ENCODE measurements at regions of chr17 and their contacts with region 1.

Region 1: GRCh38 chr17:60993497-60993896 is 315.8 kb downstream of the BCAS3 start:
- DNase-seq: no peak
- H3K4me3 ChIP-seq: no peak overlapping the region
- H3K27ac ChIP-seq: no peak overlapping the region
- H3K4me1 ChIP-seq: no peaks in the 10 kb centered on the region
- H3K27me3 ChIP-seq: no peaks in the 10 kb centered on the region
- CTCF ChIP-seq: no peak
- POLR2A ChIP-seq: no peak

Region 2: DNA sequence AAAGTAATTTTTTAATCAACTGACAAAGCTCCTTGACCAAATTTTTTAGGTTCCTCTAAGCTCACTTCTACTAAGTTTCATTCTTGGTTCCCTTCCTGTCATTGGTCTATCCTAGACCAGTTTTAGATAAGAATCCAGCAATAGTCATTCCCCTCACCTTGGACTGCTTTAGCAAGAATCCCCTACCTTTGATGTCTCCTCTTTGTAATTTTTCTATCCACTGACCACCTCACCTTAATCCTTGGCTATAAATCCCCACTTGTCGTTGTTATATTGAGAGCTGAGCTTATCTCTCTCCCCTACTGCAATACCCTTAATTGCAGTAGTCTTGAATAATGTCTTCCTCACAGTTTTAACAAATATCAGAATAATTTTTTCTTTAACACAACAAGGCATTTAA is 708.8 kb before region 1 on chr17:
- intact Hi-C with region 1: no loop called
- DNase-seq: no peak
- H3K4me3 ChIP-seq: no peak overlapping the region
- H3K27ac ChIP-seq: no peak overlapping the region
- H3K4me1 ChIP-seq: no peaks in the 10 kb centered on the region
- H3K27me3 ChIP-seq: no peaks in the 10 kb centered on the region
- CTCF ChIP-seq: no peak
- POLR2A ChIP-seq: no peak

Region 3: DNA sequence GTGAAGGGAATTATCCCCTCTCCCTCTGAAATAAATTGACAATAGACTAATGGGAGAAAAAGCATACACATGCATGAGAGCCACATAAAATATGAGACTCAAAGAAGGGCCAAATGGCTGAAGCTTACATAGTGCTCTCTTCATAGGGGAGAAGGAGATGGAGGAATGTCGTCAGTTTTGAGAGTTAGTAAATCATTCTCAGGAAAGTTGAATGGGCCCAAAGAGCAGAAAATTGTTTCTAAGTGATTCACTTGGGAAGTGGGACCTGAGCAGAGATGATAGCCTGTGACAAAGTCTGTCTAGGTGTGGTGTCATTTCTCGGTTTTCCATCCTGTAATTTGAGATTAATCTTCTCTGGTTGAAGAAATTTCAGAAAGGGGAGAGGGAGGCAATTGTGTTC is 280.8 kb before region 1 on chr17:
- intact Hi-C with region 1: loop called (anchors 10 kb)
- DNase-seq: no peak
- H3K4me3 ChIP-seq: no peak overlapping the region
- H3K27ac ChIP-seq: no peak overlapping the region
- H3K4me1 ChIP-seq: no peaks in the 10 kb centered on the region
- H3K27me3 ChIP-seq: no peaks in the 10 kb centered on the region
- CTCF ChIP-seq: no peak
- POLR2A ChIP-seq: no peak

Region 4: DNA sequence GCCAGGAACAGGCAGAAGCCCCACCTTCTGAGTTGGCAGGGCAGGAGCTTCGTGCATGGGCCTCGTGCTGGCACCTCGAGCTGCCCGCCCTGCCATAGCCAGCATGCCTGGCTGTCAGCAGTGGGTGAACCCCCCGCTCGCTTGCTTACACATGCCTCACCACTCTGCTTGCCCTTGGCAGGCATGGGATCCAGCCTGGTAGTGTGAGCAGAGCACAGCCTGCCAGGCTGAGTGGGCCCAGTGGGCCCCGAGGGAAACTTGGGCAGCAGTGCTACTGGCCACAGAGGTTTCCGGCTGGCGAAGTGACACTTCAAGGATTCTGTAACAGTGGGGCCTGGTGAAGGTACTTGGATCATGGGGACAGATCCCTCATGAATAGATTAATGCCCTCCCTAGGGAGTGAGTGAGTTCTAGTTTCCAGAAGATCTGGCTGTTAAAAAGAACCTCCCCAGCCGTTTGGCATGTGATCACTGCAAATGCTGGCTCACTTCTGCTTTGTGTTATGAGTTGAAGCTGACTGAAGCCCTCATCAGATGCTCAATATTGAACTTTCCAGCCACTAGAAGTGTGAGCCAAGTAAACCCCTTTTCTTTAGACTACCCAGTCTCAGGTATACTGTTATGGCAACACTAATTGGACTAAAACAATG is 201.1 kb before region 1 on chr17:
- intact Hi-C with region 1: no loop called
- DNase-seq: no peak
- H3K4me3 ChIP-seq: no peak overlapping the region
- H3K27ac ChIP-seq: no peak overlapping the region
- H3K4me1 ChIP-seq: no peaks in the 10 kb centered on the region
- H3K27me3 ChIP-seq: no peaks in the 10 kb centered on the region
- CTCF ChIP-seq: no peak
- POLR2A ChIP-seq: no peak

Region 5: GRCh38 chr17:61106354-61106753 is 112.9 kb after region 1 on chr17:
- intact Hi-C with region 1: no loop called
- DNase-seq: no peak
- H3K4me3 ChIP-seq: no peak overlapping the region
- H3K27ac ChIP-seq: no peak overlapping the region
- H3K4me1 ChIP-seq: no peaks in the 10 kb centered on the region
- H3K27me3 ChIP-seq: no peaks in the 10 kb centered on the region
- CTCF ChIP-seq: no peak
- POLR2A ChIP-seq: no peak

Measured in esophagus squamous epithelium (tissue), 5 donors.